ENCODE measurements at regions of chr4 and their contacts with region 1.

Region 1: DNA sequence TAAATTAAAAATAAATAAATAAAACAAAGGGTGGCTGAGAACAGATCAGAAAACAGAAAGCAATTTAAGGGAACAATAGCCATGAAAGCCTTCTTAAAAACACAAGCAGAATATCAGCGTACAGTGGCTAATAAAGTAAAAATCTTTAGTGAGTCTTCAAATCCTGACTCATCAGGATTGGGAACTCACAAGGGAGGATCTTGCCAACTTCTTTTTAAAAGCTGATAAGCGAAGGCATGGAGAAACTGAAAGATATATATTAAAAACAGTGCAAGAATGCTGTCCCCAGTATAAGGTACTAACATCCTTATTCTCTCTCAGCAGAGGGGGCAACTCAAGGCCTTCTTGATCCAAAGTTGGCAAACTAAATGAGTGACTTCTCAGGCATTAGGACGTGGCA is 180.1 kb downstream of the DHX15 start:
- DNase-seq: no peak
- ATAC-seq: no peak

Region 2: DNA sequence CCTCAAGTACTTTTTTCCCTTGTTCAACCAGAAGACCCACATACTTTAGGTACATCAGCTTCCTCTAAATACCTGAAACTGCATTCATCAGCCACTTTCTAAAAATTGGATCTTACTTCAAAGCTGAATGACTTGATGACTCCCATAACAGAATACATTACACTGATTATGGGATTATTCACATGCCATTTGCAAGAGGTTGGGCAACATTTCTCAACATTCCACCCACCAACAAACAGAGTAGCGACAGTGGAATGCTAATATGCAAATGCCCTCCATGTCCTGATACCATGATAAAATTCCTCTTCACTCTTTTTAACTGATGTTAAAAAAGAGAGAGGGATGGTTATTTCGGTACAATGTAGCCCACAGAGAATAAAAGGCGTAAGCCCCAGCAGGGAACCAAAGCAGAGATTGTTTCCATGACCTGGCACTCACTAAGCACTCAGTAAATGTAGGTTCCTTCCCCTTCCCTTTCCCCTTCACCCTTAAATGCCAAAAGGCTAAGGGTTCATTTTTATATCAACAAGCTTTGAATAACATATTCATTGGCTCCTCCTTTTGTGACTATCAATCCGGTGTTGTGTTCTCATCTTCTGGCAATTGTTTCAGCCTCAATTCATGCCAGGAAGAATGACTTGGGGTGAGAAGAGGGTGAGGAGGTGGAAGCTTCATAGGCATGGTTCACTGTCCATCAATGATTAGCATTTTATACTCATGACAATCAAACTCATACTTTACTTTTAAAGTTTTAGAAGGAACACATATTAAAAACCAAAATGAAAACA is 137.1 kb before region 1 on chr4:
- intact Hi-C with region 1: loop called (anchors 5 kb)
- DNase-seq: no peak
- ATAC-seq: no peak